ENCODE measurements at regions of chr12 and their contacts with region 1.

Region 1: GRCh38 chr12:54853995-54854566 is at the start of gene MUCL1:
- DNase-seq: peak; percentile 57
- ATAC-seq: peak; percentile 96
- H3K4me3 ChIP-seq: no peak within 1 kb of the TSS
- H3K27ac ChIP-seq: no peak within 1 kb of the TSS
- H3K4me1 ChIP-seq: no peaks in the 10 kb centered on the region
- H3K27me3 ChIP-seq: no peaks in the 10 kb centered on the region
- CTCF ChIP-seq: peak; percentile 80
- POLR2A ChIP-seq: no peak
- RAD21 ChIP-seq: peak; percentile 78
- total RNA-seq, gene MUCL1: not detected in 2 replicates

Region 2: DNA sequence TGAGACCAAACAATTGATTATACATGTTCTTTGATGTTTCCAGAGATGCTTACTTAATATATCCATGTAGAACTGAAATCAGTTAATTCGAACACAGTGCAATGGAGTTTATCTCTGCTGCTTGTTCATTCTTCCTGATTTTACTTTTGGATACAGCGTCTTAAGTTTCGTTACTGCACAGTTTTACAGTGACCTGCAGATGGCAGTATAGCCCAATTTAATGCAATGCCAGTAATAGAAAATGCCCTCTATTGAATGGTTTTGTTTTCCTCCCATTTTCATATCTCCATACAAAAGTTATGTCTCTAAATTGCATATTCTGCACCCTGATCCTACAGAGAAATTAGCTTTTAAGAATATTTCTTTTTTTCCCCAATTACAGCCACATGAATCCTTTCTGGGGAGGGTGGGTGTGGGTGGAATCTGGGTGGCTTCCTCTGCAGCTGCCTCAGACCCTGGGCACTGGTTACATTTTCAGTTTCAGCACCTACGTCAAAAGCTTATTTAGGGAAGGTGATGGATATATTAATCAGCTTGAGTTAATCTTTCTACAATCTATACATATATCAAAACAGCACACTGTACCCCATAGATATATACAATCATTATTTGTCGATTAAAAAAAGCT is 104.8 kb before region 1 on chr12:
- CTCF ChIA-PET with region 1: no interaction called
- POLR2A ChIA-PET with region 1: no interaction called
- dilution Hi-C with region 1: no loop called
- in situ Hi-C with region 1: no loop called
- intact Hi-C with region 1: loop called (anchors 5 kb)
- DNase-seq: peak; percentile 47
- ATAC-seq: peak; percentile 80
- H3K4me3 ChIP-seq: no peak overlapping the region
- H3K27ac ChIP-seq: no peak overlapping the region
- H3K4me1 ChIP-seq: no peaks in the 10 kb centered on the region
- H3K27me3 ChIP-seq: no peaks in the 10 kb centered on the region
- CTCF ChIP-seq: peak; percentile 78
- POLR2A ChIP-seq: no peak
- RAD21 ChIP-seq: peak; percentile 70

Region 3: DNA sequence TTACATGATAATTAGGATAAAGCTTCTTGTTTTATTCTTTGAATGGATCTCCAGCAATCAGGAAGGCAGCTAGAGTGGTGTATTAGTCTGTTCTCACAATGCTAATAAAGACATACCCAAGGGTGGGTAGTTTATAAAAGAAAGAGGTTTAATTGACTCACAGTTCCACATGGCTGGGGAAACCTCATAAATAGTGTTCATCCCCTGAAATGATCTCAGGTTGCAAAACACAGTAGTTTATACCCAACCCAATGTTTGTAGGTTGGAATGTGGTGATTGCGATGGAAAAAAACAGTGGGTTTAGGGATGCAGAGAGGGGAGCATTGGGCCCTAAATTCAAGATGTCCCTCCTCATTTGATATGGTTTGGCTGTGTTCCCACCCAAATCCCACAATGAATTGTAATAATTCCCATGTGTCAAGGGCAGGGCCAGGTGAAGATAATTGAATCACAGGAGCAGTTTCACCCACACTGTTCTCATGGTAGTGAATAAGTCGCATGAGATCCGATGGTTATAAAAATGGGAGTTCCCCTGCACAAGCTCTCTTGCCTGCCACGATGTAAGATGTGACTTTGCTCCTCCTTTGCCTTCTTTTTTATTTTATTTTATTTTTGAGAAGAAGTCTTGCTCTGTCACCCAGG is 11.7 kb after region 1 on chr12:
- CTCF ChIA-PET with region 1: no interaction called
- POLR2A ChIA-PET with region 1: no interaction called
- dilution Hi-C with region 1: no loop called
- in situ Hi-C with region 1: no loop called
- intact Hi-C with region 1: no loop called
- DNase-seq: no peak
- ATAC-seq: no peak
- H3K4me3 ChIP-seq: no peak overlapping the region
- H3K27ac ChIP-seq: no peak overlapping the region
- H3K4me1 ChIP-seq: no peaks in the 10 kb centered on the region
- H3K27me3 ChIP-seq: no peaks in the 10 kb centered on the region
- CTCF ChIP-seq: no peak
- POLR2A ChIP-seq: no peak
- RAD21 ChIP-seq: no peak

Region 4: DNA sequence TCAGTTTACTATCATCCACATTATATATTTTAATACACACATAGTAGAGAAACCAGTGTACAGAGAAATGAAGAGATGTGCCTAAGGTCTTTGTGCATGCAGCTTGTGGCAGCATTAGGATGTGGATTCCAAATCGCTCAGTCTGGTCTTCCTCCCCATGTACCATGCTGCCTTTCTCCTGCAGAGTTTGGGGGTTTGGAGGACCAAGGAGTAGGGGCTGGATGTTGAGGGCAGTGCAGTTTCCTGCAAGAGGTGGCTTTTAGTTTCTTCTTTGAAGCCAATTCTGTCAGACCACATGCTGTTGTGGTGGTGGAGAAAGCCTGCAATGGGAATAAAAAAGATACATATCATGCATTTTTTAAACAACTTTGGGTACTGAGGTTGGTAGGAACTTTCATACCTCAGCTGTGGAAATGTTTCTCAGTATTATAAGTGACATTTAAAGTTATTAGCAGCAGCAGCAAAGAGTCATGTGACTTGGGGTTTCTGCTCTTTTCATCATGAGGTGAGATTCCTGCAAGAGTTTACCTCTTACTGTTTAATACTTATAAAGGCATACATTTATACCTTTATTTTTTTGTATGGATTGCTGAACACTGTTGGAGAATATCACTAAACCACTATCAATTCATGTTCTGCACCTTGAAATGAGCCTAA is 96.1 kb after region 1 on chr12:
- CTCF ChIA-PET with region 1: no interaction called
- POLR2A ChIA-PET with region 1: no interaction called
- dilution Hi-C with region 1: no loop called
- in situ Hi-C with region 1: loop called (anchors 5 kb)
- intact Hi-C with region 1: no loop called
- DNase-seq: no peak
- ATAC-seq: no peak
- H3K4me3 ChIP-seq: no peak overlapping the region
- H3K27ac ChIP-seq: no peak overlapping the region
- H3K4me1 ChIP-seq: no peaks in the 10 kb centered on the region
- H3K27me3 ChIP-seq: no peaks in the 10 kb centered on the region; the same call in 1 of the 2 replicates
- CTCF ChIP-seq: no peak
- POLR2A ChIP-seq: no peak
- RAD21 ChIP-seq: no peak